ENCODE measurements at regions of chr1 and their contacts with region 1.

Region 1: DNA sequence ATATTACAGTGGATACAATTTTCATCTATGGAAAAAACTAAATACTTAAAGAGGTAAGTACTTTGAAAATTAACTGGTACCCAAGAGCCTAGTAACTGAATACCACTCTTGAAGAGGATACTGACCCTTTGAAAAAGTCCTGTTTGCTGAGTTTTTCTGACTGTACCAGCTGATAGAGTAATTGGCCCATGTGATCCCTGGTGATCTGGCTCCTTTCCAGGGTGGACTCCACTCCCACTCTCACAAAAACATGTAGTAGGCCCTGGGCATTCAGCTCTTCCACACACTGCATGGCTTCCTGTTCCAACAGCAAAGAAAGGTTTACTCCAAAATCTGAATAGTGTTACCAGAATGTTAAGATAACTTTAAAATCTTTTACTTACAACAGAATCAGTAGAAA is 53.6 kb upstream of the HP1BP3 start:
- DNase-seq: no peak
- ATAC-seq: no peak
- H3K4me3 ChIP-seq: no peak overlapping the region
- H3K27ac ChIP-seq: no peak overlapping the region
- H3K4me1 ChIP-seq: no peaks in the 10 kb centered on the region
- H3K27me3 ChIP-seq: no peaks in the 10 kb centered on the region
- CTCF ChIP-seq: no peak
- EP300 ChIP-seq: no peak
- POLR2A ChIP-seq: no peak
- RAD21 ChIP-seq: no peak

Region 2: DNA sequence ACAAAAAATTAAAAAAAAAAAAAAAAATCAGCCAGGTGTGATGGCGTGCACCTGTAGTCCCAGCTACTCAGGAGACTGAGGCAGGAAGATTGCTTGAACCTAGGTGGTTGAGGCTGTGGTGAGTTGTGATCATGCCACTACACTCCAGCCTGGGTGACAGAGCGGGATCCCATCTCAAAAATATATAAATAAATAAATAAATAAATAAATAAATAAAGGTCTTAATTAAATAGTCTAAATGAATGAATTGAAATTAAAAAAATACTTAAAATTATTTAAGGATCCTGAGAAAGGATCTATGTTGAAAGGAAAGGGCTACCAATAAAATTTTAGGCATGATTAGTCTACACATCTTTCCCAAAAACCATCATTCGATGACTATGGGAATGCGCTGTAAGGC is 13.8 kb after region 1 on chr1:
- CTCF ChIA-PET with region 1: interaction called, 4 read pairs
- POLR2A ChIA-PET with region 1: interaction called, 14 read pairs
- RAD21 ChIA-PET with region 1: no interaction called
- SMC1A ChIA-PET with region 1: interaction called, 3 read pairs
- in situ Hi-C with region 1: no loop called
- intact Hi-C with region 1: no loop called
- DNase-seq: no peak
- ATAC-seq: no peak
- H3K4me3 ChIP-seq: no peak overlapping the region
- H3K27ac ChIP-seq: no peak overlapping the region
- H3K4me1 ChIP-seq: no peaks in the 10 kb centered on the region
- H3K27me3 ChIP-seq: no peaks in the 10 kb centered on the region
- CTCF ChIP-seq: no peak
- EP300 ChIP-seq: no peak
- POLR2A ChIP-seq: no peak
- RAD21 ChIP-seq: no peak